ENCODE measurements at regions of chr10 and their contacts with region 1.

Region 1: DNA sequence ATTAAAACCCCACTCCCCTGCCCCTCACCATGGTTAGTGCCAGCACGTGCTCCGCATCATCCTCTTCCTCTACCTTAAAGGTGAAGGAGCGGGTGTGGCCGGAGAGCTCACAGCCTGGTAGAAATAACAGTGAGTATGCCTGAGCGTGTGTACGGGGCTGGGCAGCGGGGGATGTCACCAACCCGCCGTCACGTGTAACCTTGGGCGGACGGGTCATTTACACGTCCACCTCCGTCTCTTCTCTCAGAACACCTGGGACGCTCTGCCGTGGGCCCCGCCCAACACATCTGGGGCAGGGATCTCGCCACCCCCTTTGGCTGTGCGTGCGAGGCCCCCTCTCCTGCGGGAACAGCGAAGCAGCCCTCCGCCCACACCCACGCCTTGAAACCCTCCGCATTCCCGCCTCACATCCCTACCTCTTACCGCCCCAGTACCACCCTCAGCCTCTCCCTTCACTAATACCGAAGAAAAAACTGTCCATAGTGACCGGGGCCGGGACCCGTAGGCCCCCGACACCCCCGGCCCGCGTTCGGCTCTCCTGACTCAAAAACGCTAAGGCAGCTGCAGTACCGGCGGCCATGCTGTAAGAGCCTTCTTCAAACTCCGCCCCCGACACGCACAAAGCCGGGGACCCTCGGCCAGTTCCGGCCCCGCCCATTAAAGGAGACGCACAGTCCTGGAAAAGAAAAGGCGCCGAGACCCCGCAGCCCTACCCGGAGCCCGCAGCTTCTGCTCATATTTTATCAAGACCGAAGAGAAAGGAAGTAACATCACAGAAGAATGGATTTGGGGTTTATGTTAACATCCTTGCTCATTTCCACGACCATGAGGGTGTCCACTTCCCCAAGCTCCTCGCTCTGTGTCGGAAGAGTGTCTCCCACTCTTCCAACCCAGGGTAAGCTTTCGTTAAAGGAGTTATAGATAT is at the start of gene NPM3:
- DNase-seq: peak; percentile 94
- H3K4me3 Mint-ChIP-seq: peak within 1 kb of the TSS; percentile 100
- H3K27ac Mint-ChIP-seq: peak within 1 kb of the TSS; percentile 97
- H3K4me1 Mint-ChIP-seq: peaks cover 57% of the 10 kb centered on the region
- H3K27me3 Mint-ChIP-seq: peaks cover 9% of the 10 kb centered on the region
- total RNA-seq, gene NPM3: 213 to 230 TPM

Region 2: GRCh38 chr10:101353692-101354327 is 429.3 kb before region 1 on chr10 and contains the start of gene BTRC:
- CTCF ChIA-PET with region 1: no interaction called
- intact Hi-C with region 1: loop called (anchors 5 kb)
- DNase-seq: peak; percentile 98
- H3K4me3 Mint-ChIP-seq: peak within 1 kb of the TSS; percentile 92
- H3K27ac Mint-ChIP-seq: peak within 1 kb of the TSS; percentile 95
- H3K4me1 Mint-ChIP-seq: peaks cover 30% of the 10 kb centered on the region
- H3K27me3 Mint-ChIP-seq: peaks cover 2% of the 10 kb centered on the region
- total RNA-seq, gene BTRC: 10.9 to 12.7 TPM

Region 3: GRCh38 chr10:101552442-101552841 is 230.6 kb before region 1 on chr10:
- CTCF ChIA-PET with region 1: no interaction called
- intact Hi-C with region 1: no loop called
- DNase-seq: no peak
- H3K4me3 Mint-ChIP-seq: no peak overlapping the region
- H3K27ac Mint-ChIP-seq: no peak overlapping the region
- H3K4me1 Mint-ChIP-seq: peaks cover 2% of the 10 kb centered on the region
- H3K27me3 Mint-ChIP-seq: no peaks in the 10 kb centered on the region

Region 4: GRCh38 chr10:101602761-101603398 is 180.2 kb before region 1 on chr10:
- CTCF ChIA-PET with region 1: interaction called, 91 read pairs
- intact Hi-C with region 1: loop called (anchors 1 kb)
- DNase-seq: peak; percentile 90
- H3K4me3 Mint-ChIP-seq: no peak overlapping the region
- H3K27ac Mint-ChIP-seq: no peak overlapping the region
- H3K4me1 Mint-ChIP-seq: no peaks in the 10 kb centered on the region
- H3K27me3 Mint-ChIP-seq: no peaks in the 10 kb centered on the region

Region 5: GRCh38 chr10:101769541-101770180 is 13.4 kb before region 1 on chr10:
- CTCF ChIA-PET with region 1: interaction called, 13 read pairs
- intact Hi-C with region 1: no loop called
- DNase-seq: no peak
- H3K4me3 Mint-ChIP-seq: no peak overlapping the region
- H3K27ac Mint-ChIP-seq: no peak overlapping the region
- H3K4me1 Mint-ChIP-seq: peaks cover 13% of the 10 kb centered on the region
- H3K27me3 Mint-ChIP-seq: peaks cover 42% of the 10 kb centered on the region

Region 6: GRCh38 chr10:101840741-101841453 is 57.8 kb after region 1 on chr10:
- CTCF ChIA-PET with region 1: interaction called, 13 read pairs
- intact Hi-C with region 1: no loop called
- DNase-seq: peak; percentile 84
- H3K4me3 Mint-ChIP-seq: peak overlapping the region; percentile 76
- H3K27ac Mint-ChIP-seq: no peak overlapping the region
- H3K4me1 Mint-ChIP-seq: peaks cover 41% of the 10 kb centered on the region
- H3K27me3 Mint-ChIP-seq: peaks cover 14% of the 10 kb centered on the region

Region 7: GRCh38 chr10:101879456-101880231 is 96.6 kb after region 1 on chr10:
- CTCF ChIA-PET with region 1: no interaction called
- intact Hi-C with region 1: no loop called
- DNase-seq: no peak
- H3K4me3 Mint-ChIP-seq: no peak overlapping the region
- H3K27ac Mint-ChIP-seq: no peak overlapping the region
- H3K4me1 Mint-ChIP-seq: peaks cover 7% of the 10 kb centered on the region
- H3K27me3 Mint-ChIP-seq: no peaks in the 10 kb centered on the region

Region 8: GRCh38 chr10:102114861-102115618 is 332.0 kb after region 1 on chr10:
- CTCF ChIA-PET with region 1: interaction called, 3 read pairs
- intact Hi-C with region 1: loop called (anchors 2 kb)
- DNase-seq: peak; percentile 92
- H3K4me3 Mint-ChIP-seq: peak overlapping the region; percentile 93
- H3K27ac Mint-ChIP-seq: peak overlapping the region; percentile 98
- H3K4me1 Mint-ChIP-seq: peaks cover 53% of the 10 kb centered on the region
- H3K27me3 Mint-ChIP-seq: no peaks in the 10 kb centered on the region

Measured in activated naive CD4-positive, alpha-beta T cell treated with anti-CD3 and anti-CD28 coated beads for 36 hours (primary cell).